Lower leg skin (tissue), 4 donors: ENCODE measurements at regions of chrX and their contacts with region 1.

Region 1: DNA sequence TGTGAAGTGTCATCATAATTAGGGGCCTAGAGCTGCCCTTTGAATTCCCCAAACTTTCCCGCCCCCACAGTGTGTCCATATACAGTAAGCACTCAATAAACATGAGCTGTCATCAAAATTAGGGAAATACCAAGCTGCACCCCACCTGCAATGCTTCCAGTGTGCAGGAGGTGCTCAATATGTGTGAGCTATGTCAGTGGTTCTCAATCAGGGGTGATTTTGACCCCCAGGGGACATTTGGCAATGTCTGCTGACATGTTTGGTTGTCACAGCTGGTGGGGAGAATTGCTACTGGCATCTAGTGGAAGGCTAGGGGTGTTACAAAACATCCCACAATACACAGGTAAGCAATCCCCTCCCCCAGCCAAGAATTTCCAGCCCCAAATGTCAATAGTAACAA is 750 bp downstream of the CFP start:
- DNase-seq: no peak
- H3K4me3 ChIP-seq: no peak overlapping the region
- CTCF ChIP-seq: no peak
- POLR2A ChIP-seq: no peak

Region 2: GRCh38 chrX:47012131-47012530 is 616.8 kb before region 1 on chrX:
- intact Hi-C with region 1: loop called (anchors 5 kb)
- DNase-seq: no peak
- H3K4me3 ChIP-seq: no peak overlapping the region
- CTCF ChIP-seq: no peak
- POLR2A ChIP-seq: no peak

Region 3: DNA sequence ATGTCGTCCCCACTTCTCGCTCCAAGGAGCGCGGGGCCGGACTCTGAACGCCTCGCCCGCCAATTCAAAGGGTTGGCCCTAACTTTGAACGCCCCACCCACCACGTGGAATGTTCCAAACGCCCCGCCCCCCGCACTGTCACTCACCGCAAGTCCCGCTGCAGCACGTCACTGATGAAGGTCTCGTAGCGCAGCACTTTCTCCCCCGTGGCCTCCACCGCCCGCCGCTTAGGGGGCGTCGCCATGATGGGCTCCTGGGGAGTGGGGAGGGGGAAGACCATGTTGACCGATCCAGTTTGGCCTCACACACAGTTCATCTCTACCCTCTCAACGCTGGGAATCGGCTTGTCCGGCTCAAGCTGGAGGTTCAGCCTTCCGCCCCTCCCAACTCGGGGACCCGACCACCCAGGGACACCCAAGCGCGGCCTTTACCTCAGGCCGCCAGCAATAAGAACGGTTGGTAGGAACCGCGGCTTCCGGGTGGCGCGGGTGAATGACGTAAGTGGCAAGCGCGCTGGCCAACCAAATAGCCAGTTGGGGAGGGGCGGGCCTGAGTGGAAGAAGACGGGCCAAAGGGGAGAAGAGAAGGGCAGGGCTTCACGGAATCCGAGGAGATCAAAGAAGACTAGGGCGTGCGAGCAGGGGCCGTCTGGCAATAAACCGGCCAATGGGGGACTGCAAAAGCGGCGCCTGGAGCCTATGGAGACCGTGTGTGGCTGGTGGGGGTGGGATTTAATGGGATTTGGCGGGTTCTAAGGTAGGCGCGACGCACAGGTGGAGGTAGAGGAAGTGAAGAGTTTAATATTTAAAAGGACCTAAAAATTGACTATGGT is 29.9 kb after region 1 on chrX and contains the start of gene UXT:
- intact Hi-C with region 1: no loop called
- DNase-seq: peak; percentile 89 to 98
- H3K4me3 ChIP-seq: peak within 1 kb of the TSS; percentile 50
- CTCF ChIP-seq: no peak
- POLR2A ChIP-seq: no peak
- total RNA-seq, gene UXT: 95.7 to 190 (median 125) TPM